ENCODE measurements at regions of chr18 and their contacts with region 1.

Region 1: GRCh38 chr18:5879479-5879882 is 15.8 kb downstream of the TMEM200C start:
- DNase-seq: no peak
- ATAC-seq: no peak

Region 2: DNA sequence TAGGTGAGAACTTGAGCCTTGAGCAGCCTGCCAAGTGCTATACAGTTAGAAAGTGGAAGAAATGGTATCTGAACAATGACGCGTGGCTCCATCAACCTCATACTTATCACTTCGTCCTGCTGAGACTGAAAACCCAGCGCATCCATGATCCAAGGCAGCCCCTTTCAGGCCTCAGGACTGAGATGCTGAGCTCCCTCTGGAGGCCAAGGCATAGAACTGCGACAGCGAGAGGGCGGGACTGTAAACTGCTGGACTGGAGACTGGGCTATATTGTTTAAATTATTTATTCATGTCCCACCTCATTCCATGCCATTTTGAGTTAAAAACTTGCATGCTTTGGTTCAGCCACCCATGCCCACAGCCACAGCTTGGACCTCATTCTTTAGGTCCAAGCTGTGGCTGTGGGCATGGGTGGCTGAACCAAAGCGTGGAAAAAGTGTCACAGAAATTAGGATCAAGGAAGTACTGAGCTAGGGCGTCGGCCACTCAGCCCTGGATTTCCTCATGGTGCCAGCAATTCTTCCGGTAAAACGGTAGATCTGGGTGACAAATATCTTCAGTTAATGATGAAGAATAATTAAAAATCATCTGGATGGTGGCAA is 339.7 kb after region 1 on chr18:
- intact Hi-C with region 1: loop called (anchors 2 kb)
- DNase-seq: peak; percentile 35
- ATAC-seq: peak; percentile 72

Region 3: GRCh38 chr18:6401687-6402086 is 522.2 kb after region 1 on chr18:
- intact Hi-C with region 1: loop called (anchors 5 kb)
- DNase-seq: no peak
- ATAC-seq: no peak

Region 4: DNA sequence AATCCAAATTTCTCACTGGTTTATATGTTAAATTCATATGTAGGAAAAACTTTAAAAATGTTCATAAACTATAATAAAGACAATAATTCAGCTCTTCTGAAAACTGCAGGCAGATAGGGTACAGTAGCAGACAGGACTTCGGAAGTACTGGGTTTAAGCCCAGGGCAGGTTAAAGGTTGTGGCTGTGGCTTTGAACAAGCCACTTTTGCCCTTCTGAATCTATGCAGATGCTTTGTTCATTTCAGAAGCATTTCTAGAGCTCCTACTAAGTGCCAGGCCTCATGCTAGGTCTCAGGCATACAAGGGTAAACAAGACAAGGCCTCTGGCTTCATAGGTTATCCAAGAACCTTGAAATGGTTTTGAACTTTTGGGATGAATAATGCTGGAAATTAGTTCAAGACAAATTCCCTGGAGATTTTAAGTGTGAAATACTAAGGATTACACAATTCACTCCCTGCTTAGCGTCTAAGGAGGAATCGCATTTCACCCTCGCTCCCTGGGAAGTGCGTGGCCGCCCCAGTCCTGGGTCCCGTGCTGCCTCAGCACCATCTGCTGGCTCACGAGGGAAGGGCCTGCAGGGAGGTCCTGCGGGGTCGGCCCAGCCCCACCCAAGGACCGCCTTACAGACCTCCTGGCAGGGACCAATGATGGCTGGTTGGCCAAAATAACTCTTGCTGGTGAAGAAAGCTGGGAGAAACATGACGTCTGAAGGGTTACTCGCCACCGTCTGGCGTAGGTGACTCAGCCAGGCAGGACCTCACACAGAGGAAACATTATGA is 602.9 kb after region 1 on chr18:
- intact Hi-C with region 1: loop called (anchors 2 kb)
- DNase-seq: peak; percentile 83
- ATAC-seq: peak; percentile 99

Region 5: DNA sequence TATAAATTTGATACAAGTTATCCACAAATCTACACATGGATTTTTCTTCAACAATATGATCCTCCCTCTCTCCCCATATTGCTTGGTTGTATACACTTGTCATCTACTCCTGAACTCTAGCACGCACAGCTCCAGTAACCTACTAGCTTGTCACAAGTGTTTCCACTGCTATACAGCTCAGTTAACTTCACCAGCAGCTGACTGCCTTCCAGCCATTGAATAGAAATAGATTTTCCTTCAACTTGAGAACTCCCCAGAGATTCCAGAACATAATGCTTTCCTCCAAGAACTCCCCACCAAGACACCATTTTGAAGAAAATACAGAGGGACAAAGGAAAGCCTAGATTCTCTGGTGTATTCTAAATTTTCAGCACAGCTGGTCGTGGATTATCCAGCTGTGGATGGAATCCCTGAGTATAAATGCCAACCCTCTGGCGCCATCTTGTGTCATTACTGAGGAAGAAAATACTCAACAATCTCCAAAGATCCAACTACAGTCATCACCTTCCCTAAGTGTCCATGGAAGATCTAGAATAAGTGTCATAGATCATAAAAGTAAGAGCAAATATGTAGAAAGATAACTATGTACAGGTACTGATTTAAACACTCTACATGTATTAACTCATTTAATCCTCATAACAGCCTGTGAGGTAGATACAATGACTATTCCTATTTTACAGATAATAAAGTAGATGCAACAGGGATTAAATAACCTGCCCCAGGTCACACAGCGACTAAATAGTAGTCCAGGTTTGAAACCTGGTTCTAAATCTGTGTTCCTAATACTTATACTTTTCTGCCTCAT is 1006.7 kb after region 1 on chr18:
- intact Hi-C with region 1: loop called (anchors 5 kb)
- DNase-seq: no peak
- ATAC-seq: peak; percentile 71